ENCODE measurements at regions of chr3 and their contacts with region 1.

Region 1: DNA sequence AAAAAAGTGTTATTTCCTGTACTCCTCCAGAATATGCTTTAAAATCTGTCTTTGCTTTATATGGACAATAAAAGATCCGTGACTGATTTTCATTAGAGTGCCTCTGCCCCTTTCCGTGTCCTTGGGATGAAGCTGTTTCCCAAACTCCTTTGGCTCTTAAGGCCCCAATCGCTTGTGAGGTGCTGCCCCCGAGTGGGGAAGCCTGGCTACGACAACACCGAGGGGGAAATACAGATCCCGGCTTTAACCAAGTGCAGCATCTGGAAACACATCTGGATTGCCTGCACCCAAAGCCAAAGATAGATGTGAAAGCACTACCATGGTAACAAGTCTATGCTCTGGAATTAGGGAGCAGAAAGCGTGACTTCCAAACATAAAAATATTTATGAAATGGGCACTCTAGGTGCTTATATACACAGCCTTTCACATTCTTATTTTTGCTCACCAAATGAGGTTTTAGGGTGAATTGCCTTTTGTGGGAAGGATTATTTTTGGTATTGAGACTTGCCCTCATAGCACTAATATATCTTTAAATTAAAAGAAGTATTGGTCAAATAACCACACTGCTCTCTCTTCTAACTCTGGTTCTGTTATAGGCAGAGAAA is 40.6 kb upstream of the ADCY5 start:
- DNase-seq: peak; percentile 23
- H3K4me3 ChIP-seq: no peak overlapping the region
- H3K27me3 ChIP-seq: no peaks in the 10 kb centered on the region; the same call in 1 of the 2 replicates
- CTCF ChIP-seq: peak; percentile 95

Region 2: DNA sequence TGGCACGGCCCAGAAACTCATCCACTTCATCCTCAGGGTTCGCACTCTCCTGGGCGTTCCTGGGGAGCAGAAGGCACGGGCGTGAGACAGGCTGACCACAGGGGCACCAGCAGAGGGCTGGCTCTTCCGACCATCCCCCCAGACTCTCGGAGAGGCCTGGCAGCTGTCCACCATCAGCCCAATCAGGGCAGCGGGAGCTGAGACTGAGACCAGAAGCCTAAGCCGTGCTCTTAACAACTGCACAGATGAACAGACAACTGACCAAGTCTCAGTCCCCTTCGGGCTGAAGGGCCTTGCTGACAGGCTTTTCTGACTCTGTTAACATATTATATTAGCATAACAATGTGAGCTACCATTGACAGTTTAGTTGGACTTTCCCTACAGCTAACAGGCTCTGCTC is 169.7 kb before region 1 on chr3:
- CTCF ChIA-PET with region 1: interaction called, 200 read pairs
- POLR2A ChIA-PET with region 1: no interaction called
- DNase-seq: no peak
- H3K4me3 ChIP-seq: no peak overlapping the region
- H3K27me3 ChIP-seq: peaks cover 32% of the 10 kb centered on the region
- CTCF ChIP-seq: no peak

Region 3: DNA sequence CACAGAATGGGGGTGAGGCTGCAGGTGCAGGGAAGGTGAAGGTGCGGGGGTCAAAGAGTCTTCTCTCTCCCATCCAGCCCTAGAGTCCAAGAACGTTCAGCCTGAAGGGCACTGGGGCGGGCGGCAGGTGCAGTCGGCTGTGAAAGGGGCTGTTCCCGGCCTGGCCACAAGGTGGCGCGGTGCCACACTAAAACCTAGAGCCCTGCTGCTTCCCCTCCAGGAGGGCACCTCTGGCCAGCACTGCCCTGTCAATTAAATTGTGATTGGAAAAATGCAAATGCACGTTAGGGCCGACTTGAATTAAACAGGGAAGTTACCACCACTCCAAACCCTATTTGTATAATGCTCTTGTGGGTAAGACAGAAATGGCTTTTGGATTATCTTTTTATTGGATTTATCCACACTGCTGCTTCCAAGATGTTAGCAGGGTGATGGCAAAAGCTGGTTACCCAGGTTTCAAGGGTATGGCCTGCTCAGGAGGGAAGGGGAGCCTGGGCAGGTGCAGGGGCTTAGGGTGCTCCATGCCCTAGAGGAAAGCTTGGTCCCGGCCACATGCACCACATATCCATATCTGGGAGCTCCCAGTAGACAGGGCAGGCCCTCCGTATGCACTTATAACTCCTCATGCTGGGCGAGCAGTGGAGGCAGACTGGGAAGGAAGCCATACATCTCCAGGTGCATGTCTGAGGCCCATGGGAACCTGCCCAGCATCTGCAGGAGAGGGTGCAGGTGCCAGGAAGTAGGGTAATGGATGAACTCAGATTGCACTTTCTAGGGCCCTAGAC is 160.5 kb before region 1 on chr3:
- CTCF ChIA-PET with region 1: interaction called, 200 read pairs
- POLR2A ChIA-PET with region 1: no interaction called
- DNase-seq: no peak
- H3K4me3 ChIP-seq: no peak overlapping the region
- H3K27me3 ChIP-seq: peaks cover 7% of the 10 kb centered on the region
- CTCF ChIP-seq: peak; percentile 92

Region 4: GRCh38 chr3:123457841-123458240 is 31.7 kb before region 1 on chr3:
- CTCF ChIA-PET with region 1: no interaction called
- POLR2A ChIA-PET with region 1: no interaction called
- DNase-seq: no peak
- H3K4me3 ChIP-seq: no peak overlapping the region
- H3K27me3 ChIP-seq: peaks cover 9% of the 10 kb centered on the region
- CTCF ChIP-seq: no peak

Region 5: GRCh38 chr3:123476967-123477750 is 12.3 kb before region 1 on chr3:
- CTCF ChIA-PET with region 1: interaction called, 12 read pairs
- POLR2A ChIA-PET with region 1: no interaction called
- DNase-seq: no peak
- H3K4me3 ChIP-seq: no peak overlapping the region
- H3K27me3 ChIP-seq: peaks cover 14% of the 10 kb centered on the region
- CTCF ChIP-seq: no peak

Measured in BJ (cell line).